ENCODE measurements at regions of chr6 and their contacts with region 1.

Region 1: GRCh38 chr6:15441215-15441868 is 195.5 kb downstream of the JARID2 start:
- DNase-seq: no peak
- H3K4me3 ChIP-seq: no peak overlapping the region
- H3K27ac ChIP-seq: no peak overlapping the region
- H3K4me1 ChIP-seq: peaks cover 49 to 72% (median 62%) of the 10 kb centered on the region in 4 donors
- H3K27me3 ChIP-seq: no peaks in the 10 kb centered on the region
- CTCF ChIP-seq: peak; percentile 74 to 84 (median 78)
- EP300 ChIP-seq: no peak
- POLR2A ChIP-seq: no peak

Region 2: DNA sequence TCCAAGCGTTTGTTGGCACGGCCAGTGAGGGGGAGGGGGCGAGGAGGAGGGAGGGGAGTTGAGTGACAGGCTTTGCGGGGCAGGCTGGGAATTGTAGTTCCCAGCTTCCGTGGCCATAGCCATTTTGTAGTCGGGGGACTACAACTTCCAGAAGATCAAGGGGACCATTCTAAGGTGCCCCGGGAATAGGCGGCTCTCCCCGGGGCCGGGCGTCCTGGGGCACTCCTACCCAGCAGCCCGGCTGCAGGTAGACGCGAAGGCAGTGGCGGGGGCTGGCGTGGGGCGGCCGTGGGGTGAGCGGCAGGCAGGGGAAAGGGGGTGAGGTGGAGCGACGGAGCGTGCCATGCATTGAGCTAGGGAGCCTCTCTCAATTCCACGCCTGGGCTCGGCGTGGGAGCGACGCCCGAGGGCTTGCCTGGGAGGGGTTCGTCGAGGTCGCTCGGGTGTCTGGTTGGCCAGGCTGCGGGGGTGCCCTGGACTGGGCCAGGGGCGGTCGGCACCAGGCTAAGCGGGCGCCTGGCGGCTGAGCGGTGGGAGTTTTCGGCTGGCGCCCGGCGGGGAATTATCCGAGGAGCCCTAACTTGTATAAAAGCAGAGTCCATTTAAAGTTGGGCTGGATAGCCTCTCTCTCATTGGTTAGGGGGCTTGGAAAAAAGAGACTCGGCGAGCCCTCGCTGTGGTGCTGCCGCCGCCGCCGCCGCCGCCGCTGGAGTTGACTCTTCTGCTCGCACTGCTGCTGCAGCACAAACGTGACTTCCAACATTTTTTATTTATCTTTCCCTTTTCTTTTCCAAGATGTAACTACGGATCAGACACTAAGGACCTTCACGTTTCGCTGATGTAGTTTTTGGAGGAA is 195.8 kb before region 1 on chr6 and contains the start of gene JARID2:
- intact Hi-C with region 1: loop called (anchors 5 kb)
- DNase-seq: peak; percentile 99
- H3K4me3 ChIP-seq: peak within 1 kb of the TSS; percentile 81 to 91 (median 82)
- H3K27ac ChIP-seq: peak within 1 kb of the TSS; percentile 91 to 98 (median 97)
- H3K4me1 ChIP-seq: peaks cover 24 to 38% (median 29%) of the 10 kb centered on the region in 4 donors
- H3K27me3 ChIP-seq: no peaks in the 10 kb centered on the region
- CTCF ChIP-seq: peak in 1 of 3 experiments; percentile 8
- EP300 ChIP-seq: no peak
- POLR2A ChIP-seq: peak; percentile 54
- total RNA-seq, gene JARID2: 5.8 to 10.4 (median 8.1) TPM

Measured in esophagus muscularis mucosa (tissue), 4 donors.